GM10248 (cell line): ENCODE measurements at regions of chr7 and their contacts with region 1.

Region 1: DNA sequence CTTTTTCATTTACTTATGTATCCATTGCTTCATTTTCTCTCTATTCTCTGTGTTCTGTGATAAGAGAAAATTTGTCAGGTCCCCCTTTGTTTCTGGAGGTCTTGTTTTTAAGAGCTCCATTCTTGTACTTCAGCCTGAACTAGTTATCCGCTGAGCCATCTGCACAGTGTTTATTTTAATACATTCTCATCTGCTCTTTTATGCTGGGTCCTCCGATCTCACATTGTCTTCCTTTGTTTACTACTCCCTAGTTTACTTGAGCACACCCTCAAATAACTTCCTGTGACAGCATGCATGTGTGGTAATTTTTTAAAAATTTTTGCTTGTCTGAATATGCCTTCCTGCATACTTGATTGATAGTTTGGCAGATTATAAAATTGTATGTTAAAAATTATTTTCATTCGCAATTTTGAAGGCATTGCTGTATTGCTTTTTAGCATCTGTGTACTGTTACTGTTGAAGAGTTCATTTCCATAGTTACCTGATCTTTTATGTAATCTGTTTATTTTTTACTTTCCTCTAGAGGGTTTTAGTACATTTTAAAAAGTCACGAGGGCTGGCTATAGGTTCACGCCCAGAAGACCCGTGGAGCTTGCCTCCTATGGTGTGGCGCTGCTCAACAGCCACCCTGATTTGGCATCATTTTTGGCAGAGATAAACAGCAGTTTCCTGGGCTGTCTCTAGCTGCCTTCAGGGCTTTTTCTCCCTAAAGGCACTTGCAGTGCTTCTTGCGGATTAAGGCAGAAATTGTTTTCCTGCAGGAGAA is 31.9 kb downstream of the RSBN1L start:
- DNase-seq: no peak
- CTCF ChIP-seq: no peak

Region 2: GRCh38 chr7:77702513-77702912 is 25.6 kb before region 1 on chr7:
- CTCF ChIA-PET with region 1: interaction called, 14 read pairs
- POLR2A ChIA-PET with region 1: no interaction called
- DNase-seq: no peak
- CTCF ChIP-seq: no peak

Region 3: GRCh38 chr7:77716804-77717203 is 11.3 kb before region 1 on chr7:
- CTCF ChIA-PET with region 1: interaction called, 20 read pairs
- POLR2A ChIA-PET with region 1: no interaction called
- DNase-seq: no peak
- CTCF ChIP-seq: no peak